A549 (cell line): ENCODE measurements at regions of chrX and their contacts with region 1.

Region 1: DNA sequence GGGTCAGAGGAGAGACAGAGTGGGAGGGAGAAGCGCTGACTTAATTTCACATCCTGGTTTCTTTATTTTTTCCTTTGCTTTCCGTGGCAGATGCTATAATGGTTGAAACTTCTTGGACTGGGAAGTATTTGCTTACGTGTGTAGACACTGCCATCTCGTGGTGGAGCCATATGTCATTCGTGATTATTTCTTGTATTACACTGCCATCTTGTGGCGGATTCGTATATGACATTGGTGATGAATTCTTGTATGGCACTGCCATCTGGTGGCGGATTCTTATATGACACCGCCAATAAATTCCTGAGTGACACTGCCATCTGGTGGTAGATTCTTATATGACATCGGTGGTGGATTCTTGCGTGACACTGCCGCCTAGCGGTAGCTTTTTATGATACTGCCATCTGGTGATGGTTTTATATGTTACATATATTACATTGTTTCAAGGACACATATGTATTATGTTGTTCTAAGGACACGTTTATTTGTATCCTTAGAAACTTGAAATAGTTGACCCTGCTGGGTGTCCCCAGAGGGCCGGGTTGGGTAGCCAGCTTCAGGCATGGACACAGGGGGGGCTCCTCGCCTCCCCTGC is 37.3 kb upstream of the CLCN4 start:
- DNase-seq: peak; percentile 34 to 92
- ATAC-seq: peak; percentile 61 to 78
- H3K4me3 ChIP-seq: no peak overlapping the region
- H3K27ac ChIP-seq: peak overlapping the region; percentile 54 to 67; a peak in 5 of 6 replicates
- H3K4me1 ChIP-seq: no peaks in the 10 kb centered on the region
- CTCF ChIP-seq: peak; percentile 100
- EP300 ChIP-seq: no peak
- POLR2A ChIP-seq: no peak
- RAD21 ChIP-seq: peak; percentile 100

Region 2: DNA sequence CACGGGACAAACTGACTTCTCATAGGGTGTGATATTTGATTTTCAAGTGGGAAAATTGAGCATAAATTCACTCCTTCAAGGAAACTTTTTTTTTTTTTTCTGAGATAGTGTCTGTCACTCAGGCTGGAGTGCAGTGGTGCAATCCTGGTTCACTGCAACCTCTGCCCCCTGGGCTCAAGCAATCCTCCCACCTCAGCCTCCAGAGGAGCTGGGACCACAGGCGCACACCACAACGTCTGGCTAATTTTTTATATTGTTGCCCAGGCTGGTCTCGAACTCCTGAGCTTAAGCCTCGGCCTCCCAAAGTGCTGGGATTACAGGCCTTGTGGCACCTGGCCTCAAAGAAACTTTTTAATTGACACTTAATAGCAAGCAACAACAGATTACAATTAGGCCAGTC is 138.6 kb before region 1 on chrX:
- CTCF ChIA-PET with region 1: interaction called, 49 read pairs
- POLR2A ChIA-PET with region 1: no interaction called
- DNase-seq: no peak
- ATAC-seq: no peak
- H3K4me3 ChIP-seq: no peak overlapping the region
- H3K27ac ChIP-seq: no peak overlapping the region
- H3K4me1 ChIP-seq: no peaks in the 10 kb centered on the region
- CTCF ChIP-seq: no peak
- EP300 ChIP-seq: no peak
- POLR2A ChIP-seq: no peak
- RAD21 ChIP-seq: no peak

Region 3: DNA sequence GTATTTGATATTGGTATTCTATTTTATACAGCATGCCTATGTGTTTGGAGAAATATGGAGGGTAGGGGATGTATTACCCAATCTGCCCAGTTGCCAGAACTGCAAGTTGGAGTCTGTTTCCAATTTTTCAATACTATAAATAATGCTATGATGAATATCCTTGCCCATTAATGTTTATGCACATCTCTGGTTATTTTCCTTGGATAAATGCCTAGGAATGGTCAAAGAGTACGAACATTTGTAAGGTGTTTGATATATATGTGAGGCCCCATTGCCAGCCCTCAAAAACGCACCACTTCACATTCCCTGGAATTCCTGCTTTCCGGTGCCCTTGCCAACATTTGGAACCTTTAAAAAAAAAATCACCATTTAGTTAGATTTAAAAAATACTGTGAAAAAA is 118.0 kb before region 1 on chrX:
- CTCF ChIA-PET with region 1: interaction called, 216 read pairs
- POLR2A ChIA-PET with region 1: no interaction called
- DNase-seq: no peak
- ATAC-seq: no peak
- H3K4me3 ChIP-seq: no peak overlapping the region
- H3K27ac ChIP-seq: peak overlapping the region in 1 of 2 experiments; percentile 60; a peak in 2 of 6 replicates
- H3K4me1 ChIP-seq: peaks cover 26% of the 10 kb centered on the region
- CTCF ChIP-seq: no peak
- EP300 ChIP-seq: no peak
- POLR2A ChIP-seq: no peak
- RAD21 ChIP-seq: no peak

Region 4: GRCh38 chrX:10022580-10023245 is 96.8 kb before region 1 on chrX:
- CTCF ChIA-PET with region 1: interaction called, 18 read pairs
- POLR2A ChIA-PET with region 1: no interaction called
- DNase-seq: peak; percentile 39 to 96
- ATAC-seq: peak; percentile 85 to 94
- H3K4me3 ChIP-seq: peak overlapping the region; percentile 20; the same call in 2 of the 3 replicates
- H3K27ac ChIP-seq: peak overlapping the region; percentile 89 to 100
- H3K4me1 ChIP-seq: peaks cover 67% of the 10 kb centered on the region
- CTCF ChIP-seq: no peak
- EP300 ChIP-seq: peak; percentile 91 to 92; a peak in 4 of 5 replicates
- POLR2A ChIP-seq: no peak
- RAD21 ChIP-seq: 0 out of 5 replicates have a peak, but pooled peaks of 1 of the 2 experiments have one; percentile 17

Region 5: GRCh38 chrX:10054396-10054795 is 65.1 kb before region 1 on chrX:
- CTCF ChIA-PET with region 1: interaction called, 13 read pairs
- POLR2A ChIA-PET with region 1: no interaction called
- DNase-seq: no peak
- ATAC-seq: no peak
- H3K4me3 ChIP-seq: no peak overlapping the region
- H3K27ac ChIP-seq: no peak overlapping the region
- H3K4me1 ChIP-seq: peaks cover 16% of the 10 kb centered on the region; the same call in 2 of the 3 replicates
- CTCF ChIP-seq: no peak
- EP300 ChIP-seq: no peak
- POLR2A ChIP-seq: no peak
- RAD21 ChIP-seq: no peak

Region 6: DNA sequence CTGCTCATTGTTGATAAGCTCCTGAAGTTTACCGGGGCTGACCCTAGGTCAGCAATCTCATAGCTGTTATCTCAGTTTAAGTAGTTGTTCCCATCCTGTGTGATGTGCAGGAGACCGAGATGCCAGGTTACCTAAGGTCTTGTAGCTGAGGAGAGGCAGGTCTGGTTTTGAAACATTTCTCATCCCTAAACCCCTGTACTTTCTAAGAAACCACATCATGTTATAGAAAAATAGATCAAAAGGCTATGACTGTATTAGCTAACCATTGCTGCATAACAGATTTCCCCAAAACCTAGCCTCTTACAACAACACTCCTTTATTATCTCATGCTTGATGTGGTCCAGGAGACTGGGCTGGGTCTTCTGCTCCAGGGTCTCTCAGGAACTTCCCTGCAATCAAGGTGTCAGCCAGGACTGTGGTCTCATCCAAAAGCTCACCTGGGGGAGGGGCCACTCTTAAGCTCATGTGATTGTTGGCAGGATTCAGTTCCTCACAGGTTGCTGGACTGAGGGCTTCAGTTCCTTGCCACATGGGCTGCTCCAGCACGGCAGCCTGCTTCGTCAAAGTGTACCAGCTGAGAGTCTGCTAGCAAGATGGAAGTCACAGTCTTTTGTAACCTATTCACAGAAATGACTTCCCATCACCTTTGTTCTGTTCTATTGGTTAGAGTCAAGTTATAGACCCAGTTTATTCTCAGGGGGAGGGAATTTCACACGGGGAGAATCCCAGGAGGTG is 23.6 kb before region 1 on chrX:
- CTCF ChIA-PET with region 1: interaction called, 33 read pairs
- POLR2A ChIA-PET with region 1: no interaction called
- DNase-seq: no peak
- ATAC-seq: no peak
- H3K4me3 ChIP-seq: no peak overlapping the region
- H3K27ac ChIP-seq: no peak overlapping the region
- H3K4me1 ChIP-seq: peaks cover 5% of the 10 kb centered on the region; the same call in 2 of the 3 replicates
- CTCF ChIP-seq: no peak
- EP300 ChIP-seq: no peak
- POLR2A ChIP-seq: no peak
- RAD21 ChIP-seq: no peak

Region 7: GRCh38 chrX:10156199-10157031 is 36.9 kb after region 1 on chrX and contains the start of gene CLCN4:
- CTCF ChIA-PET with region 1: interaction called, 18 read pairs
- POLR2A ChIA-PET with region 1: no interaction called
- DNase-seq: peak; percentile 47 to 59
- ATAC-seq: peak; percentile 91 to 97
- H3K4me3 ChIP-seq: peak within 1 kb of the TSS; percentile 41
- H3K27ac ChIP-seq: peak within 1 kb of the TSS; percentile 62 to 79
- H3K4me1 ChIP-seq: peaks cover 14% of the 10 kb centered on the region; the same call in 2 of the 3 replicates
- CTCF ChIP-seq: no peak
- EP300 ChIP-seq: no peak
- POLR2A ChIP-seq: no peak
- RAD21 ChIP-seq: no peak
- polyA plus RNA-seq, gene CLCN4: 4.4 and 4.7 TPM in 2 replicates